ENCODE measurements at regions of chr2 and their contacts with region 1.

Region 1: GRCh38 chr2:73268830-73269685 is 15.2 kb downstream of the FBXO41 start:
- DNase-seq: no peak
- H3K4me3 ChIP-seq: no peak overlapping the region
- H3K27ac ChIP-seq: no peak overlapping the region
- H3K4me1 ChIP-seq: no peaks in the 10 kb centered on the region
- H3K27me3 ChIP-seq: no peaks in the 10 kb centered on the region
- CTCF ChIP-seq: no peak

Region 2: GRCh38 chr2:73307720-73308119 is 38.7 kb after region 1 on chr2:
- CTCF ChIA-PET with region 1: no interaction called
- POLR2A ChIA-PET with region 1: interaction called, 20 read pairs
- intact Hi-C with region 1: no loop called
- DNase-seq: no peak
- H3K4me3 ChIP-seq: no peak overlapping the region
- H3K27ac ChIP-seq: no peak overlapping the region
- H3K4me1 ChIP-seq: no peaks in the 10 kb centered on the region
- H3K27me3 ChIP-seq: peaks cover 4% of the 10 kb centered on the region
- CTCF ChIP-seq: no peak